ENCODE measurements at regions of chr11 and their contacts with region 1.

Region 1: GRCh38 chr11:100681064-100681502 is 6.0 kb upstream of the ARHGAP42 start:
- DNase-seq: peak; percentile 25 to 28
- ATAC-seq: peak; percentile 83 to 93 (median 91)
- H3K4me3 ChIP-seq: no peak overlapping the region
- H3K4me3 Mint-ChIP-seq: no peak overlapping the region
- H3K27ac ChIP-seq: peak overlapping the region; percentile 52
- H3K27ac Mint-ChIP-seq: peak overlapping the region; percentile 41 to 85
- H3K4me1 ChIP-seq: peaks cover 13% of the 10 kb centered on the region
- H3K4me1 Mint-ChIP-seq: peaks cover 23 to 35% of the 10 kb centered on the region in 2 donors
- H3K27me3 ChIP-seq: no peaks in the 10 kb centered on the region
- H3K27me3 Mint-ChIP-seq: no peaks in the 10 kb centered on the region
- CTCF ChIP-seq: no peak

Region 2: GRCh38 chr11:100525635-100526034 is 155.4 kb before region 1 on chr11:
- intact Hi-C with region 1: no loop called
- DNase-seq: no peak
- ATAC-seq: no peak
- H3K4me3 ChIP-seq: no peak overlapping the region
- H3K4me3 Mint-ChIP-seq: no peak overlapping the region
- H3K27ac ChIP-seq: no peak overlapping the region
- H3K27ac Mint-ChIP-seq: no peak overlapping the region
- H3K4me1 ChIP-seq: no peaks in the 10 kb centered on the region
- H3K4me1 Mint-ChIP-seq: no peaks in the 10 kb centered on the region
- H3K27me3 ChIP-seq: no peaks in the 10 kb centered on the region
- H3K27me3 Mint-ChIP-seq: no peaks in the 10 kb centered on the region
- CTCF ChIP-seq: no peak

Region 3: DNA sequence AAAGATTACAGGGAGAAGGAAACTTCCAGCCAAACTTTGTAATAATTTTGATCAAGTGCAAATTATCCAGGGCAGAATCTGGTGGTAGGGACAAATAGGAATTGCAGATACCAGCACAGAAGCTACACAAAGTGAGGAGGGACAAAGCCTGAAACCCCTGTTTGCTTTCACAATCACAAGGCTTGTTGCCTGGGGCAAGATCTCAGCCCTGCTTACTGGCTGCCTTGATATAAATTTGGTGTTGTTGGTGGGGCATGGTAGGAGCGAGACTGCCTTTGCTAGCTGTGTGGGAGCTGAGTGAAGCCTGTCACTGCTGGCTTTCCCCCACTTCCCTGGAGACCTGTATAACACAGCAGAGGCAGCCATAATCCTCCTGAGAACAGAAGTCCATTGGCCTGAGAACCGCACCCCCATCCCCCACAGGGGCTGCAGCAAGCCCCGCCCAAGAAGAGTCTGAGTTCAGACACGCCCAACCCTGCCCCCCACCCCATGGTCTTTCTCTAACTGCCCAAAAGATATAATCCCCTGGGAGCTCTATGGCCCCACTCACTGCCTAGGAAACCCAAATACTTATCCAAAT is 33.3 kb before region 1 on chr11:
- intact Hi-C with region 1: loop called (anchors 5 kb)
- DNase-seq: no peak
- ATAC-seq: no peak
- H3K4me3 ChIP-seq: no peak overlapping the region
- H3K4me3 Mint-ChIP-seq: no peak overlapping the region
- H3K27ac ChIP-seq: no peak overlapping the region
- H3K27ac Mint-ChIP-seq: no peak overlapping the region
- H3K4me1 ChIP-seq: peaks cover 3% of the 10 kb centered on the region
- H3K4me1 Mint-ChIP-seq: peaks cover 14 to 17% of the 10 kb centered on the region in 2 donors
- H3K27me3 ChIP-seq: no peaks in the 10 kb centered on the region
- H3K27me3 Mint-ChIP-seq: peaks cover 13 to 20% of the 10 kb centered on the region in 2 donors
- CTCF ChIP-seq: no peak

Region 4: GRCh38 chr11:100670140-100670539 is 10.9 kb before region 1 on chr11:
- intact Hi-C with region 1: no loop called
- DNase-seq: no peak
- ATAC-seq: no peak
- H3K4me3 ChIP-seq: no peak overlapping the region
- H3K4me3 Mint-ChIP-seq: no peak overlapping the region
- H3K27ac ChIP-seq: no peak overlapping the region
- H3K27ac Mint-ChIP-seq: no peak overlapping the region
- H3K4me1 ChIP-seq: no peaks in the 10 kb centered on the region
- H3K4me1 Mint-ChIP-seq: no peaks in the 10 kb centered on the region
- H3K27me3 ChIP-seq: no peaks in the 10 kb centered on the region
- H3K27me3 Mint-ChIP-seq: peaks cover 5 to 23% of the 10 kb centered on the region in 2 donors
- CTCF ChIP-seq: no peak

Region 5: DNA sequence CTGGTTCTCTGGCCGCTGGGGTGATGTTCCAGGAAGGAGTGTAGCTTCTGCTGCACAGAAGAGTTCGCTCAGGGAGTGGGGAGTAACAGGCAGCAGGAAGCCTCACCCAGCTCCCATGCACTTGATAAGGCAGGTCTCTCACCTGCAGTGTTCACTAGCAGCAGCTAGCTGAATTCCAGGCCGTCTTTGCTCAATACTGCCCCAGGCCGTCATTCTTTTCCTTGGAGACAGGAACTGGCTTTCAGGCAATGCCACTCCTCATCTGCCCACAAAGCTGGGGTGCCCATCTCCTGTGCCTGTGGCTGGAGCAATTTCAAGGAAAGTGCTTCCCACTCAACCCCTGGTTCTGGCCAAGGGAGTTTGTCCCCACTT is 72.1 kb after region 1 on chr11:
- intact Hi-C with region 1: no loop called
- DNase-seq: no peak
- ATAC-seq: no peak
- H3K4me3 ChIP-seq: no peak overlapping the region
- H3K4me3 Mint-ChIP-seq: no peak overlapping the region
- H3K27ac ChIP-seq: no peak overlapping the region
- H3K27ac Mint-ChIP-seq: no peak overlapping the region
- H3K4me1 ChIP-seq: no peaks in the 10 kb centered on the region
- H3K4me1 Mint-ChIP-seq: peaks cover 0 to 8% of the 10 kb centered on the region in 2 donors
- H3K27me3 ChIP-seq: no peaks in the 10 kb centered on the region
- H3K27me3 Mint-ChIP-seq: no peaks in the 10 kb centered on the region
- CTCF ChIP-seq: no peak

Measured in natural killer cell (primary cell).